GM12878 (cell line): ENCODE measurements at regions of chr13 and their contacts with region 1.

Region 1: DNA sequence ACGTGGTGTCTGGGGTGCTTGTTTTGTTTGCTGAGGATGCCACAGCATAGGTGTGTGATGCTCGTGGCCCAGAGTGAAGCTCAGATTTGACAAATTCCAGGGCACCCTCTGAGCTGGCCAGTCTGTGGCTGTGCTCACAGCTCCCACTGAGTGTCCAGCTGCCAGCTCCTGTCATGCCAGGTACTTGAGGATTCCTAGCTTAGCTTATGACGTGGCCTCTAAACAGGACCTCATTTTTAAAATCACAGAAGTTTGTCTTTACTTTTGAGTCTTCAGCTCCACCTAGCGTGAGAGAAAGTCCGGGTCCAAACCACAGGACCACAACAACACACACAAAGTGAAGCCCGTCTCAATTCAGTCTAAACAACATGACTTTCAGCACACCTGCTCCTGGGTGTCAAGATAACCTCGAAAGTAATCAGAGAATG is 117.3 kb downstream of the RAB20 start:
- DNase-seq: no peak
- ATAC-seq: peak; percentile 74
- H3K4me3 ChIP-seq: peak overlapping the region; percentile 30; the same call in 1 of the 2 replicates
- H3K27ac ChIP-seq: peak overlapping the region; percentile 45
- H3K4me1 ChIP-seq: peaks cover 41% of the 10 kb centered on the region
- H3K27me3 ChIP-seq: no peaks in the 10 kb centered on the region
- CTCF ChIP-seq: peak; percentile 44 to 60 (median 54)
- EP300 ChIP-seq: peak in 1 of 2 experiments; percentile 30; a peak in 1 of 4 replicates
- POLR2A ChIP-seq: no peak
- RAD21 ChIP-seq: peak; percentile 81

Region 2: GRCh38 chr13:110233181-110233950 is 210.9 kb before region 1 on chr13:
- CTCF ChIA-PET with region 1: interaction called, 15 read pairs
- POLR2A ChIA-PET with region 1: no interaction called
- RAD21 ChIA-PET with region 1: no interaction called
- SMC1A ChIA-PET with region 1: interaction called, 5 read pairs
- in situ Hi-C with region 1: no loop called
- intact Hi-C with region 1: no loop called
- DNase-seq: no peak
- ATAC-seq: no peak
- H3K4me3 ChIP-seq: no peak overlapping the region
- H3K27ac ChIP-seq: no peak overlapping the region
- H3K4me1 ChIP-seq: no peaks in the 10 kb centered on the region
- H3K27me3 ChIP-seq: peaks cover 0 to 5% of the 10 kb centered on the region in 2 experiments; a peak in 1 of 4 replicates
- CTCF ChIP-seq: no peak
- EP300 ChIP-seq: no peak
- POLR2A ChIP-seq: no peak
- RAD21 ChIP-seq: no peak

Region 3: DNA sequence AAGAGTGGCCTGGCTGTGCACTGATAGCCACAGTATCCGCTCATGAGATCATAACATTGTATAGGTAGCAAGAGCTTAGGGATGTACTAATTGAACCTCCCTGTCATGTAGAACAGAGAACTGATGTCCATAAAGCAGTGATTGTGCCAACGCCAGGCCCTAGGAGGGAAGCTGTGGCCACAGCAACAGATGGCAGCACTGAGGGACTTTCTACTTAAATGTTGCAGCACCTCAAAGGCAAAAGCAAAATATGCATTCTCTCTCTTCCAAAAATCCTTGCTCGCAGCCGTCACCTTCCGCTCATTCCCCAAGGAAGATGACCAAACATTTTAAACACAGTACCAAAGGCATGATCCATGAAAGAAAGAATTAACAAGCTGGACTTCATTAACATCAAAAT is 169.6 kb before region 1 on chr13:
- CTCF ChIA-PET with region 1: interaction called, 11 read pairs
- POLR2A ChIA-PET with region 1: no interaction called
- RAD21 ChIA-PET with region 1: no interaction called
- SMC1A ChIA-PET with region 1: interaction called, 3 read pairs
- in situ Hi-C with region 1: no loop called
- intact Hi-C with region 1: no loop called
- DNase-seq: no peak
- ATAC-seq: peak; percentile 41; the same call in 2 of the 3 replicates
- H3K4me3 ChIP-seq: no peak overlapping the region
- H3K27ac ChIP-seq: no peak overlapping the region
- H3K4me1 ChIP-seq: no peaks in the 10 kb centered on the region
- H3K27me3 ChIP-seq: peaks cover 0 to 2% of the 10 kb centered on the region in 2 experiments; a peak in 3 of 4 replicates
- CTCF ChIP-seq: 0 out of 6 replicates have a peak, but pooled peaks of 1 of the 3 experiments have one; percentile 9
- EP300 ChIP-seq: no peak
- POLR2A ChIP-seq: no peak
- RAD21 ChIP-seq: no peak

Region 4: GRCh38 chr13:110421696-110422385 is 22.4 kb before region 1 on chr13:
- CTCF ChIA-PET with region 1: interaction called, 15 read pairs
- POLR2A ChIA-PET with region 1: no interaction called
- RAD21 ChIA-PET with region 1: interaction called, 16 read pairs
- SMC1A ChIA-PET with region 1: interaction called, 20 read pairs
- in situ Hi-C with region 1: no loop called
- intact Hi-C with region 1: no loop called
- DNase-seq: no peak
- ATAC-seq: peak; percentile 63
- H3K4me3 ChIP-seq: no peak overlapping the region
- H3K27ac ChIP-seq: no peak overlapping the region
- H3K4me1 ChIP-seq: no peaks in the 10 kb centered on the region
- H3K27me3 ChIP-seq: peaks cover 0 to 3% of the 10 kb centered on the region in 2 experiments; a peak in 2 of 4 replicates
- CTCF ChIP-seq: no peak
- EP300 ChIP-seq: peak in 1 of 2 experiments; percentile 81; a peak in 1 of 4 replicates
- POLR2A ChIP-seq: no peak
- RAD21 ChIP-seq: no peak

Region 5: DNA sequence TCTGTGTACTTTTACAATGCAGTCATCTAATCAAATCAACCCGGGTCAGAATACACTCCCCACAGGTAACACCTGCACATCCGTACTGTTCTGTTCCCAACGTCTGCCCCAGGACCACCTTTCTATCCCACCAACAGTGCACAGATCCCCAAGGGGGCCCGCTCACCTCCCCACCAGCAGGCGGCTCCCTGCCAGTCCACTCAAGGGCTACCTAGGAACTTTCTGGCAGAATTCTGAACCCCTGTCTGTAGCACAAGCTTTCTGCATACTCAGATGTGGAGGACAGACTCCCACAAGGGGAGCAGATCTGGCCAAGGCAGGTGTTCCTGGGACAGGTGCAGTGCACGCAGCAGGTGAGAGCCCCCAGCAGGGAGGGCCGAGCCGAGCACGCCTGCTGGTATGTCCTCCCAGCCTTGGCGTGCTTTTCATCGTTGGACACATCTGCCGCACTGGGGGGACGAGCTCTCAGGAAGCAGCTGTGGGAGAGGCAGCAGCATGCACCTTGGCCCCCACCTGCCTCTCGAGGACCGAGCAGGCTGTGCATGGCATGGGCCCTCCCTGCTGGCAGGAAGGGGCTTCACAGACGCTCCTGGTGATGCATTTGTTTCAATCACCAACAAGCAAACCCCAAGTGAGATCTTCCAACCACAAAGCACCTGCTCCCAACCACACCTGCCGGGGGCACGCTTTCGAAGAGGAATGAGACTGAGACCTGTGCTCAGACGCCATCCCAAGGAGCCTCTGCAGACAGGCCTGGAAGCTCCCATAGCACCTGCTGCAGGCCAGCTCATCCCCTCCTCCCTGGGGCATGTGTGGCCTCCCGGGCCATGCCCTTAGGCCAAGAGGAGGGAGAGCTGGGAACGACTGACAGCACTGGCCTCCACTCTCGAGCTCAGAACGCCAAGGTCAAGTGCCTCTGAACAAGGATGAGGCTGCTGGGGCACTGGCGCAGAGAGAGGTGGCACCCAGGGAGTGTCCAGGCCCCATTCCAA is 81.4 kb after region 1 on chr13:
- CTCF ChIA-PET with region 1: interaction called, 14 read pairs
- POLR2A ChIA-PET with region 1: no interaction called
- RAD21 ChIA-PET with region 1: interaction called, 3 read pairs
- SMC1A ChIA-PET with region 1: no interaction called
- in situ Hi-C with region 1: no loop called
- intact Hi-C with region 1: no loop called
- DNase-seq: peak; percentile 35
- ATAC-seq: peak; percentile 90
- H3K4me3 ChIP-seq: no peak overlapping the region
- H3K27ac ChIP-seq: no peak overlapping the region
- H3K4me1 ChIP-seq: peaks cover 18% of the 10 kb centered on the region
- H3K27me3 ChIP-seq: no peaks in the 10 kb centered on the region
- CTCF ChIP-seq: peak; percentile 25 to 39 (median 26); a peak in 4 of 6 replicates
- EP300 ChIP-seq: peak in 1 of 2 experiments; percentile 60; a peak in 1 of 4 replicates
- POLR2A ChIP-seq: no peak
- RAD21 ChIP-seq: peak; percentile 63